Psoas muscle (tissue), 8 donors: ENCODE measurements at regions of chr21 and their contacts with region 1.

Region 1: DNA sequence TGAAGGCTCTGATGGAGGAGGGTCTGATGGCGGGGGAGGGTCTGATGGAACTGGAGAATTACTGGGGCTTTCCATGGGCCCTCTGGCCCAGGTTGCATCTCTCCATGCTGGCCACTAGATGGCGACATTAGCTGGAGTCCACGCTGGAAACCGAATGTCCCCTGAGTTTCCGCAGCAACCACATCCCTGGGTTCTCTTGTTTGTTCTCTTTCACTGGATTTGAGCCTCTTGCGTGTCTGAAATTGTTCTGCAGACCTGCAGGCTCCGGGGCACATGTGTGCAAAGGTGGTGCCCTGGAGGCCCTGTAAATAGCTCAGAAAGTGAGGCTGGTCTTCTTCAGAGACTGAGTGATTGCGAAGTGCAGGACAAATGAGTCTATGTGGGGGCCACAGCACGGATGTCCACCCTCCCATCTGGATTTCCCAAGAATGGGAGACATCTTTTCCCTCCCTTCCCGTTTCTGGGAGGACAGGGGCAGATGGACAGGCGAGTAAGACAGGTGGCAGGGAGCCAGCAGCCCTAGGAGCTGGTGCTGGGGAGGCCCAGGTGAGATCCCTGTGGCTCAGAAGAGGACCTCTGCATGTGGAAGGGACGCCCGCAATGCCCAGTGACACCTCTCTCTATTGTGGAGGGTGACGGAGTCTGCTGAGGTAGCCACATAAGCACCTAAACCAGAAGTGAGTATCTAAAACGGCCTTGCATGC is 73.2 kb upstream of the ABCG1 start:
- DNase-seq: peak in 1 of 2 donors; percentile 66
- ATAC-seq: peak; percentile 74 to 90 (median 80)
- H3K4me3 ChIP-seq: no peak overlapping the region
- H3K27ac ChIP-seq: no peak overlapping the region
- H3K4me1 ChIP-seq: no peaks in the 10 kb centered on the region
- H3K27me3 ChIP-seq: no peaks in the 10 kb centered on the region
- CTCF ChIP-seq: peak; percentile 95

Region 2: DNA sequence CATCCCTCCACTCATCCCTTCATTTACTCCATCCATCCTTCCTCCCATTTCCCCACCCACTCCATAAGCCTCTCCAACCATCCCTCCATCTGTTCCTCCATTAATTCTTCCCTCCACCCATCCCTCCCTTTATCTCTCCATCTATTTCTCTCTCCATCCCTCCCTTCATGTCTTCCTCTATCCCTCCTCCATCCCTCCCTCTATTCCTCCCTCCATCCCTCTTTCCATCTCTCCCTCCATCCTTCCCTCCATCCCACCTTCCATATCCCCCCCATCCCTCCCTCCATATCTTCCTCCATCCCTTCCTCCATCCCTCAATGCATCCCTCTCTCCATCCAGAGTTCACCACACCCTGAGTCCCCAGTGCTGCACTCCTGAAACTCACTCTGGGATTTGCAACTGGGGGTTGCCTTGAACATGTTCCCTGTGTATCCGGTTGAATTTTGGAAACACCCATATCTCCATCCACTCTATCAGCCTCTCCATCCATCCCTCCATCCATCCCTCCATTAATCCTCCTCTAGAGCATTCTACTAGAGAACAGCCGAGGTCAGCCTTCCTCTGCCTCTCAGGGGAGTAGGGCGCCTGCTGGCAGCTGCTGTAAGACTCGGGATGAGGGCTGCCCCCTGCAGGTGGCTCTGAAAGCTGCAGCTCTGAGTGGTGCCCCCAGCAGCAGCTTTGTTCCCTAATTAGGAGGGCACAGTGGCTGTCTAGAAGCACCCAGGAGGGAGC is 112.6 kb after region 1 on chr21:
- intact Hi-C with region 1: loop called (anchors 2 to 5 kb)
- DNase-seq: peak; percentile 66 to 86
- ATAC-seq: peak; percentile 78 to 88 (median 82)
- H3K4me3 ChIP-seq: no peak overlapping the region
- H3K27ac ChIP-seq: no peak overlapping the region
- H3K4me1 ChIP-seq: peaks cover 20% of the 10 kb centered on the region
- H3K27me3 ChIP-seq: no peaks in the 10 kb centered on the region
- CTCF ChIP-seq: peak; percentile 81

Region 3: DNA sequence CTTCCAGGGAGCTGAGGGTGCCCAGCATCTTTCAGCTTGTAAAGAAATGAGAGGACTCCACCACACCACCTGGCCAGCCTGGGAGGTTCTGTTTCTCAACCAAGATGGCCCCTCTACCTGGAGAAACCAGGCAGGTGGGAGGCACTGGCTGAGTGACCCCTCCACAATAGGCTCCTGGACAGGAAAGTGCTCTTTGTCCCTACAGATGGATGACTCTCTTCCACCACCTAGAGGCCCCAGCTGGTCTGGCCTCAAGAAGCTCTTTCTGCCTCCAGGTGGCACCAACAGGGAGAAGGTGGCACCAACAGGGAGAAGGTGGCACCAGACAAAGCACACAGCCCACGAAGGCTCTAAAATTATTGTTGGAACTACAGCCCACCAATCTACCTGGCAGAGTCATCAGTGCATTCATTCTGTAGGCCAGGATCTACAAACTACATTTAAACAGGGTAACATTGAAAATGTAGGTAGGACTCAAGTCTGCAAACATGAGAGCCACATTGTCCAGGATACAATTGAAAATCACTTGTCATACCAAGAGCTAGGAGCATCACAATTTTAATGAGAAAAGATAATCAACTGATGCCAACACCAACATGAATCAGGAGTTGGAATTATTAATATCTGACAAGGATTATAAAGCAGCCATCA is 235.7 kb after region 1 on chr21:
- intact Hi-C with region 1: loop called in 1 of 2 experiments (anchors 10 kb)
- DNase-seq: no peak
- ATAC-seq: no peak
- H3K4me3 ChIP-seq: no peak overlapping the region
- H3K27ac ChIP-seq: no peak overlapping the region
- H3K4me1 ChIP-seq: no peaks in the 10 kb centered on the region
- H3K27me3 ChIP-seq: peaks cover 0 to 10% (median 5%) of the 10 kb centered on the region in 3 donors
- CTCF ChIP-seq: peak; percentile 37

Region 4: GRCh38 chr21:42440187-42440792 is 294.6 kb after region 1 on chr21:
- intact Hi-C with region 1: loop called in 1 of 2 experiments (anchors 10 kb)
- DNase-seq: no peak
- ATAC-seq: no peak
- H3K4me3 ChIP-seq: no peak overlapping the region
- H3K27ac ChIP-seq: no peak overlapping the region
- H3K4me1 ChIP-seq: no peaks in the 10 kb centered on the region
- H3K27me3 ChIP-seq: peaks cover 0 to 14% (median 3%) of the 10 kb centered on the region in 3 donors
- CTCF ChIP-seq: no peak

Region 5: DNA sequence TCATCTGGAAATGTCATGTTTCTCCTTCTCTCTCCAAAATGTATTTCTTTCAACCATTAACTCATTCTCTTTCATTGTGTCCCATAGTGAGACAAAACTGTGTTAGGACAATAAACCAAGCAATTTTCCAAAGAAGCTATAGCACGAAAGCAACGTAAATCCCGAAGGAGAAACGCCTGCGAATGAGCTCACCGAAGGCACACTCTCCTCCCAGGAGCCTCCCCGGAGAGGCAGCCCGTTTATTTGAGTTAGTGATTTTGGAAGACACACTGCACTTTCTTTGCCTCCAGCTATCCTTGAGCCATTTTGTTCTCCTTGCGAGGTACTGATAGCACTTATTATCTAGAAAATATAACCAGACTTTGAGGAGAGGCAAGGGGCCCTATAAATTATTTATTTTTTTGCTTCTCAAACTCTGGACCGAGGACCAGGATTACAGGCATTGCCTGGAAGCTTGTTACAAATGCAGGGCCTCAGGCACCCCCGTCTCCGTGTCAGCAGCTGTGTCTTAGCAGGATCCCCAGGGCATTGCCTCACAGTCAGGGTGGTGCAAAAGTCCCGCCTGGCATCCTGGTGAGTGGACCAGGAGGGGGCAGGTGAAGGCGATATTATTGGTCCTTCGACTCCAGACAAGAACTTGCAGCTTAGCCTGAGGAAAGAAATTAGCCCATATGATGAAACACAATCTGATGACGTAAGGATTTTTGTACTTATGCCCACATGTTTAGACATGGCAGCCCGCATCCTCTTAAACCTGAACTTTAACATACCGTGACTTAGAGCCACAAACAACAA is 309.3 kb after region 1 on chr21:
- intact Hi-C with region 1: loop called in 1 of 2 experiments (anchors 5 kb)
- DNase-seq: peak in 1 of 2 donors; percentile 45
- ATAC-seq: no peak
- H3K4me3 ChIP-seq: no peak overlapping the region
- H3K27ac ChIP-seq: no peak overlapping the region
- H3K4me1 ChIP-seq: no peaks in the 10 kb centered on the region
- H3K27me3 ChIP-seq: peaks cover 0 to 15% (median 2%) of the 10 kb centered on the region in 3 donors
- CTCF ChIP-seq: no peak